ENCODE measurements at regions of chr20 and their contacts with region 1.

Region 1: GRCh38 chr20:48352659-48353058 is 475.1 kb downstream of the PREX1 start:
- DNase-seq: no peak
- ATAC-seq: no peak
- H3K4me3 ChIP-seq: no peak overlapping the region
- H3K4me3 Mint-ChIP-seq: no peak overlapping the region
- H3K27ac ChIP-seq: no peak overlapping the region
- H3K27ac Mint-ChIP-seq: no peak overlapping the region
- H3K4me1 ChIP-seq: no peaks in the 10 kb centered on the region
- H3K4me1 Mint-ChIP-seq: no peaks in the 10 kb centered on the region
- H3K27me3 ChIP-seq: no peaks in the 10 kb centered on the region
- H3K27me3 Mint-ChIP-seq: peaks cover 15% of the 10 kb centered on the region
- CTCF ChIP-seq: no peak

Region 2: DNA sequence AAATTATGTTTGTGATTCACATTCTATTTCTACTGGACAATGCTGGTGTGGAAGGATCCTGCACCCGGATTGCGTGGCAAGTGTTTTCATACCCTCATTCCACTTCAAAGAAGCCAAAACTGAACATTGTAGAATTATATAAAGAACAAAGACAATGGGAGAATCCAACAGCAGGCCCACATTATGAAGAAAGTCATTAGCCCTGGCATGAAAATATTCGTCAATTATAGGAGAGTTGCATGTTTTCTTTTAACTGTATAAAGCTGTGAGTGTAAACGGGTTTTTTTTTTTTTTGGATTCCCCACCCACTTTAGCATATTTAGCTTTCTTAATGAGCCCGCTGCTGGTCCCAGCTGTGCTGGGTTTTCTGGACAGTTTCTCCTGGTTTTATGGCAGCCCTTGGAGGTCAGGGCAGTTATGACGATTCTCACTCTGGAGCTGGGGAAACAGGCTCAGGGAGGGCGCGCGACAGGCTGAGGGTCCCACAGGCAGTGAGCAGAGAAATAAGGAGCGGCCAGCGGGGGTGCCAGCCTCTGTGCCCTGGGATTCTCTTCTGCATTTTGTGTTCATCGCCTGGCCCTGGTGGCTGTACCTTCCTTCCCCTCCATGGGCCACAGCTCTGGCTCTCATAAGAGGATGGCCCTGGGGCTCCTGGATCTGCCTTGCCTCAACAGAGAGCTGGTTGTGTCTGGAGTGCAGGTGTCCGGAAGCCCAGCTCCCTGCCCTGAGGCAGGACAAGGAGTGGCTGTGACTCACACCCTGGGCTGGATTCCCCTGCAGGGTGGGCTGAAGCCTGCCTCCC is 543.3 kb before region 1 on chr20:
- CTCF ChIA-PET with region 1: no interaction called
- POLR2A ChIA-PET with region 1: no interaction called
- intact Hi-C with region 1: no loop called
- DNase-seq: no peak
- ATAC-seq: no peak
- H3K4me3 ChIP-seq: no peak overlapping the region
- H3K4me3 Mint-ChIP-seq: no peak overlapping the region
- H3K27ac ChIP-seq: no peak overlapping the region
- H3K27ac Mint-ChIP-seq: no peak overlapping the region
- H3K4me1 ChIP-seq: no peaks in the 10 kb centered on the region
- H3K4me1 Mint-ChIP-seq: no peaks in the 10 kb centered on the region
- H3K27me3 ChIP-seq: no peaks in the 10 kb centered on the region
- H3K27me3 Mint-ChIP-seq: peaks cover 36% of the 10 kb centered on the region
- CTCF ChIP-seq: no peak

Region 3: GRCh38 chr20:48329635-48330277 is 22.9 kb before region 1 on chr20:
- CTCF ChIA-PET with region 1: no interaction called
- POLR2A ChIA-PET with region 1: no interaction called
- intact Hi-C with region 1: loop called in 1 of 2 experiments (anchors 1 kb)
- DNase-seq: no peak
- ATAC-seq: no peak
- H3K4me3 ChIP-seq: no peak overlapping the region
- H3K4me3 Mint-ChIP-seq: no peak overlapping the region
- H3K27ac ChIP-seq: no peak overlapping the region
- H3K27ac Mint-ChIP-seq: no peak overlapping the region
- H3K4me1 ChIP-seq: no peaks in the 10 kb centered on the region
- H3K4me1 Mint-ChIP-seq: no peaks in the 10 kb centered on the region
- H3K27me3 ChIP-seq: no peaks in the 10 kb centered on the region
- H3K27me3 Mint-ChIP-seq: peaks cover 19% of the 10 kb centered on the region
- CTCF ChIP-seq: no peak

Measured in CD8-positive, alpha-beta T cell (primary cell).